Ovary (tissue), 10 donors: ENCODE measurements at regions of chr12 and their contacts with region 1.

Region 1: DNA sequence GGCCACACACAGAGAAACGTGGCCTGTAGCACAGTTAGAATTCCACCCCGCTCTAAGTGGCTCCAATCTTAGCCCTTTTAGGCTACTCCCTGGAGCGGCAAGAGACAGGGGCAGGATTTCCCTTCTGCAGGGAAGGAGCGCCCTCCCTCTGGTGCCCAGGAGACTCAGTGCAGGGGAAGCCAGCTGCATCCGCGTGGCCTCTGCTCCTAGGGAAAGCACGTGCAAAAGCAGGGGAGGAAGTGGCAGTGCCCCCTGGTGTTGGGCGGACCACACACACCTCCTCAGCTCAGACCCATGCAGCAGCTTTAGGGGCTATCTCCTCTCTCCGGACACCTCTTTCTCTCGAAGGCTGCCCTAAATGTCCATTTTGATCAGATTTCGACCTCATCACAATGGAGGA is 50.0 kb downstream of the SPRING1 start:
- DNase-seq: peak in 1 of 5 donors; percentile 62
- H3K4me3 ChIP-seq: no peak overlapping the region
- H3K27ac ChIP-seq: no peak overlapping the region
- H3K4me1 ChIP-seq: no peaks in the 10 kb centered on the region
- H3K27me3 ChIP-seq: no peaks in the 10 kb centered on the region
- CTCF ChIP-seq: peak in 1 of 3 donors; percentile 12
- EP300 ChIP-seq: no peak
- POLR2A ChIP-seq: no peak

Region 2: GRCh38 chr12:115998119-115998633 is 689.7 kb before region 1 on chr12:
- intact Hi-C with region 1: loop called in 1 of 4 experiments (anchors 10 kb)
- DNase-seq: peak in 1 of 5 donors; percentile 39
- H3K4me3 ChIP-seq: no peak overlapping the region
- H3K27ac ChIP-seq: no peak overlapping the region
- H3K4me1 ChIP-seq: peaks cover 5% of the 10 kb centered on the region
- H3K27me3 ChIP-seq: no peaks in the 10 kb centered on the region
- CTCF ChIP-seq: peak; percentile 53 to 81 (median 71)
- EP300 ChIP-seq: no peak
- POLR2A ChIP-seq: no peak